ENCODE measurements at regions of chr11 and their contacts with region 1.

Region 1: DNA sequence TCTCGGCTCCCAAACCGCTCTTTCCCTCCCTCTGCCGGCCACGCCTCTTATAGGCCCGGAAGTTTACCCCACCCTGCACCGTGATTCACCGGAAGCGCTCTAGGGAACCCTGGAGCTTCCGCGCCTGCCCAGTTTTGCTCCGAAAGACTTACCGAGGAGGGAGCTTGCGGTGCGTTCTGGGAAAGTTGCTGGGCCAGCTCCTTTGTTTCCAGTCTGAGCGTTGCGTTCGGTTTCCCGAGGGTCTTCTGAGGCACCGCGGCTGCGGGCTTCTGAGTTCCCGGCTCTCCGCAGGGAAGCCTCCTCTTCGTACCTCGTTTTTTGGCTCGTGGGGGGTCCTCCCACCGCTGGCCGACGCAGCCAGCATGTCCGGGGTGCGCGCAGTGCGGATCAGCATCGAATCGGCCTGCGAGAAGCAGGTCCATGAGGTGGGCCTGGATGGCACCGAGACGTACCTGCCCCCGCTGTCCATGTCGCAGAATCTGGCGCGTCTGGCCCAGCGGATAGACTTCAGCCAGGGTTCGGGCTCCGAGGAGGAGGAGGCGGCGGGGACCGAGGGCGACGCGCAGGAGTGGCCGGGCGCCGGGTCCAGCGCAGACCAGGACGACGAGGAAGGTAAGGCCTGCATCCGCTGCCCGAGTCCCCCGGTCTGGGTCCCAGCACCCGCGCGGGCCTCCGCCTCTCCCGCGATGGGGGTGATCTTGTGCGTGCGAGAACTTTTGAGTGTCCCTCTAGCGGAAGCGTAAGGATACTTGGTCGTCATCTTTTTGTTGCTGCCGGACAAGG is at the start of gene MED17:
- DNase-seq: peak; percentile 83 to 96 (median 90)
- ATAC-seq: peak; percentile 96
- H3K4me3 ChIP-seq: peak within 1 kb of the TSS; percentile 98
- H3K27ac ChIP-seq: peak within 1 kb of the TSS; percentile 92
- H3K4me1 ChIP-seq: peaks cover 4 to 14% of the 10 kb centered on the region in 2 experiments
- H3K27me3 ChIP-seq: no peaks in the 10 kb centered on the region
- CTCF ChIP-seq: peak; percentile 47 to 59 (median 57)
- EP300 ChIP-seq: no peak; the same call in 1 of the 2 replicates
- POLR2A ChIP-seq: peak; percentile 96
- RAD21 ChIP-seq: peak; percentile 15 to 33; a peak in 3 of 4 replicates
- polyA plus RNA-seq, gene MED17: 6.7 to 7.7 TPM

Region 2: GRCh38 chr11:93662177-93662575 is 122.2 kb before region 1 on chr11:
- CTCF ChIA-PET with region 1: no interaction called
- POLR2A ChIA-PET with region 1: no interaction called
- in situ Hi-C with region 1: no loop called
- intact Hi-C with region 1: loop called (anchors 2 kb)
- DNase-seq: peak in 1 of 4 experiments; percentile 23
- ATAC-seq: peak; percentile 4
- H3K4me3 ChIP-seq: peak overlapping the region; percentile 91
- H3K27ac ChIP-seq: peak overlapping the region; percentile 95
- H3K4me1 ChIP-seq: peaks cover 0 to 10% of the 10 kb centered on the region in 2 experiments; a peak in 2 of 5 replicates
- H3K27me3 ChIP-seq: peaks cover 2 to 4% of the 10 kb centered on the region in 2 experiments; a peak in 1 of 5 replicates
- CTCF ChIP-seq: no peak
- EP300 ChIP-seq: no peak
- POLR2A ChIP-seq: no peak
- RAD21 ChIP-seq: no peak

Region 3: GRCh38 chr11:93773045-93773477 is 11.3 kb before region 1 on chr11:
- CTCF ChIA-PET with region 1: no interaction called
- POLR2A ChIA-PET with region 1: interaction called, 10 read pairs
- in situ Hi-C with region 1: no loop called
- intact Hi-C with region 1: no loop called
- DNase-seq: no peak
- ATAC-seq: peak; percentile 63
- H3K4me3 ChIP-seq: no peak overlapping the region
- H3K27ac ChIP-seq: no peak overlapping the region
- H3K4me1 ChIP-seq: peaks cover 0 to 5% of the 10 kb centered on the region in 2 experiments; a peak in 1 of 5 replicates
- H3K27me3 ChIP-seq: no peaks in the 10 kb centered on the region
- CTCF ChIP-seq: no peak
- EP300 ChIP-seq: no peak
- POLR2A ChIP-seq: no peak
- RAD21 ChIP-seq: no peak

Region 4: GRCh38 chr11:93796441-93797231 is 12.3 kb after region 1 on chr11:
- CTCF ChIA-PET with region 1: no interaction called
- POLR2A ChIA-PET with region 1: interaction called, 16 read pairs
- in situ Hi-C with region 1: no loop called
- intact Hi-C with region 1: no loop called
- DNase-seq: no peak
- ATAC-seq: peak; percentile 80
- H3K4me3 ChIP-seq: no peak overlapping the region
- H3K27ac ChIP-seq: peak overlapping the region; percentile 21; the same call in 1 of the 3 replicates
- H3K4me1 ChIP-seq: peaks cover 0 to 5% of the 10 kb centered on the region in 2 experiments; a peak in 1 of 5 replicates
- H3K27me3 ChIP-seq: no peaks in the 10 kb centered on the region
- CTCF ChIP-seq: no peak
- EP300 ChIP-seq: no peak
- POLR2A ChIP-seq: no peak
- RAD21 ChIP-seq: no peak

Measured in K562 (cell line).